H1 (cell line): ENCODE measurements at regions of chr15 and their contacts with region 1.

Region 1: DNA sequence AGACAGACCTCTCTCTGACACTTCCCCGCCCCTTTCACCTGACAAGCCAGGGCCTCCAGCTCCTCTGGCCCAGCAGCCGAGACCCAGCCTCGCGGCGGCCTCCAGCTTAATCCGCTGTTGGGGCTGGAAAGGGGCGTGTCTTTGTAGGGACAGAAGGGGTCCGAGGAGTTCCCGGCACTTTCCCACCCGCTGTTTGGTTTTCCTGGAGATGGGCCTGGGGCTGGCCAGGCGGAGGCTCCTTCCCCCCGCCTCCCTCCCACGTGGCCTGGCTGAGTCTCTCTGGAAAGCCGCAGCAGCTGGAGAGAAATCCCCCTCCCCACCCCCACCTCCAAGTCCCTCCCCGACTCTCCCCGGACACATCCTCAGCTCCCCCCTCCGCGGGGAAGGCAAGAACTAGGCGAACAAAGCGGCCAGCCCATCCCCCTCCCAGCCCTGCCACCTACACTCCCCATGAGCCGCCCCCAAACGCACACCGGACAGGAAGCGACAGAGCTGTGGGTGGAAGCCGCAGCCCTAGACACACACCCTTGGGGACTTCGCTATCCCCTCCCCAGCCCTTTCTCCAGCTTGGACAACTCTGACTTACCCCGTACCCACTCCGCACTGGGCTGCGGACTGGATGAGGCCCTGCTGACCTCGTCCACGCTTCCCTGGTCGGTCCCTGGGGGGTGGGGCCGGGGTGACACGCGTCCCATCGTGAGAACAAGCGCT is 1.2 kb downstream of the IGDCC4 start:
- DNase-seq: peak in 1 of 2 experiments; percentile 90
- H3K4me3 ChIP-seq: peak overlapping the region; percentile 82 to 91 (median 86)
- H3K27ac ChIP-seq: peak overlapping the region; percentile 71
- H3K4me1 ChIP-seq: peaks cover 16 to 48% (median 31%) of the 10 kb centered on the region in 4 experiments
- H3K27me3 ChIP-seq: peaks cover 0 to 16% (median 9%) of the 10 kb centered on the region in 4 experiments; a peak in 4 of 7 replicates
- CTCF ChIP-seq: no peak
- EP300 ChIP-seq: no peak; a peak in 1 of 3 replicates
- POLR2A ChIP-seq: peak in 1 of 2 experiments; percentile 51; a peak in 2 of 3 replicates
- RAD21 ChIP-seq: peak; percentile 0 to 23; a peak in 2 of 4 replicates

Region 2: GRCh38 chr15:65327651-65328393 is 93.7 kb before region 1 on chr15:
- CTCF ChIA-PET with region 1: no interaction called
- POLR2A ChIA-PET with region 1: no interaction called
- DNase-seq: no peak
- H3K4me3 ChIP-seq: no peak overlapping the region
- H3K27ac ChIP-seq: no peak overlapping the region
- H3K4me1 ChIP-seq: peaks cover 0 to 7% (median 1%) of the 10 kb centered on the region in 4 experiments; a peak in 5 of 7 replicates
- H3K27me3 ChIP-seq: no peaks in the 10 kb centered on the region
- CTCF ChIP-seq: no peak
- EP300 ChIP-seq: no peak
- POLR2A ChIP-seq: no peak
- RAD21 ChIP-seq: no peak

Region 3: DNA sequence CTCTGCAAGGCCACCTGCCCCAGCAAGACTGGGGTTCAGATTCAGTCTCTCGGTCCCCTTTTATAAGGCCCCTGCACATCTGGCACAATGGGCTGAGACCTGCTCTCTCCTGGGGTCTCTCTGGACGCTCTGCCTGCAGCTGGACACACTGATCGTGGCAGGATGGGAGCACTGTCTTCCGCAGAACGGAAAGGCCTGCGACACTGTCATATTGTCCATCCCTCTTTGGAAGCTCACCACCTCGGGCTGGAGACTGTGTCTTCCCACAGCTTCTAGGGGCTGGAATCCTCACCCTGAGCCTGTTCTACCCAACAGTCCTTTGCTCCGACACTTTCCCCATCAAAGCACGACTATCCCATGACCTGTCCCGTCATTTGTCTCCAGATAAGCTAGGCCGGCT is 12.7 kb after region 1 on chr15:
- CTCF ChIA-PET with region 1: interaction called, 10 read pairs
- POLR2A ChIA-PET with region 1: interaction called, 26 read pairs
- DNase-seq: peak in 1 of 2 experiments; percentile 42
- H3K4me3 ChIP-seq: no peak overlapping the region
- H3K27ac ChIP-seq: no peak overlapping the region
- H3K4me1 ChIP-seq: no peaks in the 10 kb centered on the region
- H3K27me3 ChIP-seq: no peaks in the 10 kb centered on the region
- CTCF ChIP-seq: no peak
- EP300 ChIP-seq: no peak
- POLR2A ChIP-seq: no peak
- RAD21 ChIP-seq: no peak